H1 (cell line): ENCODE measurements at regions of chr19 and their contacts with region 1.

Region 1: GRCh38 chr19:35279985-35280821 is 2.1 kb upstream of the HAMP start:
- DNase-seq: no peak
- H3K4me3 ChIP-seq: no peak overlapping the region
- H3K27ac ChIP-seq: no peak overlapping the region
- H3K4me1 ChIP-seq: peaks cover 0 to 7% (median 5%) of the 10 kb centered on the region in 4 experiments; a peak in 5 of 7 replicates
- H3K27me3 ChIP-seq: no peaks in the 10 kb centered on the region
- CTCF ChIP-seq: no peak
- EP300 ChIP-seq: no peak
- POLR2A ChIP-seq: no peak
- RAD21 ChIP-seq: no peak

Region 2: DNA sequence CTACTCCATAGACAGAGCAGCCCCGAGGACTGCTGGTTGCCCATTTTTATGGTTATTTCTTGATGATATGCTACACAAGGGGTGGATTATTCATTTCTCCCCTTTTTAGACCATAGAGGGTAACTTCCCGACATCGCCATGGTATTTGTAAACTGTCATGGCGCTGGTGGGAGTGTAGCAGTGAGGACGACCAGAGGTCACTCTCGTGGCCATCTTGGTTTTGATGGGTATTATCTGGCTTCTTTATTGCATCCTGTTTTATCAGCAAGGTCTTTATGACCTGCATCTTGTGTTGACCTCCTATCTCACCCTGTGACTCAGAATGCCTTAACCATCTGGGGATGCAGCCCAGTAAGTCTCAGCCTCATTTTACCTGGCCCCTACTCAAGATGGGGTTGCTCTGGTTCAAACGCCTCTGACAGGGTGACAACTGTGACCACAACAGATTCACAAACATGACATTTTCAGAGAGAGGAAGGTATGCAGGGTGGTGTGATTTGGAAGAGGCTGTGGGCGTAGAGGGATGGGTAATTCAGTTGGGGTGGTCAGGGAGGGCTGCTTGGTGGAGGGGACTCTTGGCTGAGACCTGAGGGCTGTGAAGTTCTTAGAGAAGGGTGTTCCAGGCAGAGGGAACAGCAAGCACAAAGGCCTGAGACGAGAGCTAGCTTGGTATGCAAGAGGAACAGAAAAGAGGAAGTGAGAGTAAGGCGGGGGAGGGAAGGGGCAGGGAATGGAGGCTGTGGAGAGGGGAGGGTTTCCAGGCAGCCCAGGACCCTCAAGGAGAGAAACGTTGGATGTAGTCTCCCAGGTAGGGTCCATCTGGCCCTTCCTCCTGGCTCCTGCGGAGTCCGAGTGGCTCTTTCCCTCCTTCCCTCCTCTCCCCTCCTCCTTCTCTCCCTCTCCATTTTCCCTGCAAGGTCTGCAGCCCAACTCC is 75.1 kb before region 1 on chr19:
- CTCF ChIA-PET with region 1: no interaction called
- POLR2A ChIA-PET with region 1: no interaction called
- DNase-seq: no peak
- H3K4me3 ChIP-seq: no peak overlapping the region
- H3K27ac ChIP-seq: peak overlapping the region; percentile 50; the same call in 1 of the 2 replicates
- H3K4me1 ChIP-seq: peaks cover 9 to 30% (median 16%) of the 10 kb centered on the region in 4 experiments
- H3K27me3 ChIP-seq: no peaks in the 10 kb centered on the region
- CTCF ChIP-seq: no peak
- EP300 ChIP-seq: no peak
- POLR2A ChIP-seq: peak in 1 of 2 experiments; percentile 42; a peak in 1 of 3 replicates
- RAD21 ChIP-seq: no peak

Region 3: DNA sequence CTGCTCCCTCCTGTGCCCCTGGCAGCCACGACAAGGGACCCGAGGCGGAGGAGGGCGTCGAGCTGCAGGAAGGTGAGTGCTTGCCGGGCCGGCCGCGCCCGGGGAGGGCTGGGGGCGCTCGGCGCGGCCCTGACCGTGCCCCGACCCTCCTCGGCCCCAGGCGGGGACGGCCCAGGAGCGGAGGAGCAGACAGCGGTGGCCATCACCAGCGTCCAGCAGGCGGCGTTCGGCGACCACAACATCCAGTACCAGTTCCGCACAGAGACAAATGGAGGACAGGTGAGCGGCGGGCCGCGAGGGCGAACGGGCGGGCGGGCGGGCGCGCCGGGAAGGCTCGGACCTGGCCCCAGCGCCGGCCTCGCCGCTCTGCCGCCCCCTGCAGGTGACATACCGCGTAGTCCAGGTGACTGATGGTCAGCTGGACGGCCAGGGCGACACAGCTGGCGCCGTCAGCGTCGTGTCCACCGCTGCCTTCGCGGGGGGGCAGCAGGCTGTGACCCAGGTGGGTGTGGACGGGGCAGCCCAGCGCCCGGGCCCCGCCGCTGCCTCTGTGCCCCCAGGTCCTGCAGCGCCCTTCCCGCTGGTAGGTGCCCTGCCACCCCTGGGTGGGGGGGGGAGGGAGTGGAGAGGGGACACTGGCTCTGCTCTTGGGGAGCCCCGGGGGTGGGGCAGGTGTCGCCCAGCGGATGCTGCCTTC is 10.6 kb before region 1 on chr19:
- CTCF ChIA-PET with region 1: interaction called, 7 read pairs
- POLR2A ChIA-PET with region 1: interaction called, 28 read pairs
- DNase-seq: peak in 1 of 2 experiments; percentile 97
- H3K4me3 ChIP-seq: peak overlapping the region; percentile 32 to 68 (median 59)
- H3K27ac ChIP-seq: peak overlapping the region; percentile 93
- H3K4me1 ChIP-seq: peaks cover 0 to 14% (median 8%) of the 10 kb centered on the region in 4 experiments; a peak in 5 of 7 replicates
- H3K27me3 ChIP-seq: no peaks in the 10 kb centered on the region
- CTCF ChIP-seq: peak; percentile 46 to 72 (median 66)
- EP300 ChIP-seq: no peak
- POLR2A ChIP-seq: peak in 1 of 2 experiments; percentile 50; a peak in 2 of 3 replicates
- RAD21 ChIP-seq: peak; percentile 62 to 63

Region 4: GRCh38 chr19:35290381-35291127 is 10.4 kb after region 1 on chr19:
- CTCF ChIA-PET with region 1: no interaction called
- POLR2A ChIA-PET with region 1: interaction called, 18 read pairs
- DNase-seq: no peak
- H3K4me3 ChIP-seq: no peak overlapping the region
- H3K27ac ChIP-seq: no peak overlapping the region
- H3K4me1 ChIP-seq: peaks cover 0 to 20% (median 9%) of the 10 kb centered on the region in 4 experiments; a peak in 6 of 7 replicates
- H3K27me3 ChIP-seq: no peaks in the 10 kb centered on the region; a peak in 1 of 7 replicates
- CTCF ChIP-seq: no peak
- EP300 ChIP-seq: no peak
- POLR2A ChIP-seq: no peak
- RAD21 ChIP-seq: no peak

Region 5: GRCh38 chr19:35295792-35296462 is 15.7 kb after region 1 on chr19:
- CTCF ChIA-PET with region 1: no interaction called
- POLR2A ChIA-PET with region 1: interaction called, 18 read pairs
- DNase-seq: peak in 1 of 2 experiments; percentile 66
- H3K4me3 ChIP-seq: no peak overlapping the region
- H3K27ac ChIP-seq: no peak overlapping the region
- H3K4me1 ChIP-seq: peaks cover 0 to 19% (median 10%) of the 10 kb centered on the region in 4 experiments; a peak in 6 of 7 replicates
- H3K27me3 ChIP-seq: peaks cover 0 to 12% (median 2%) of the 10 kb centered on the region in 4 experiments; a peak in 2 of 7 replicates
- CTCF ChIP-seq: no peak
- EP300 ChIP-seq: no peak
- POLR2A ChIP-seq: no peak
- RAD21 ChIP-seq: no peak